ENCODE measurements at regions of chr6 and their contacts with region 1.

Region 1: DNA sequence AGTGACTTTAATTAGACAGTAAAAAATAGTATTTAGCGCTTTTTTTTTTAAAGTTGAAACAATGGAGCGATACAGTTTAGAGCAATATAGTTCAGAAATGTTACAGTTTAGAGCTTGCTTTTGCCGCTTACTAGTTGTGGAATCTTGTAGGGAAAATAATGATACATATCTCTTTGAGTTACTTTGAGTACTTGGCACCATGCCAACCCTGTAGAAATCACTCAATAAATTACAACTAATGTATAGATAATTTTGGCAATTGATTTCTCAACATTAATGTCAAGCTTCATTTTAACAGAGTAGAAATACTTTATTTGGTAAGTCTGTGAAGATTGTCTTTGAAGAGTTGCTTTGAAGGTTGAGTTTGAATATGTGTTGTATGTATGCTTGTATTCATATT is 27.4 kb downstream of the CDC40 start:
- DNase-seq: no peak
- ATAC-seq: no peak
- H3K4me3 Mint-ChIP-seq: no peak overlapping the region
- H3K27ac Mint-ChIP-seq: no peak overlapping the region
- H3K4me1 Mint-ChIP-seq: peaks cover 46% of the 10 kb centered on the region
- H3K27me3 Mint-ChIP-seq: no peaks in the 10 kb centered on the region
- CTCF ChIP-seq: no peak

Region 2: DNA sequence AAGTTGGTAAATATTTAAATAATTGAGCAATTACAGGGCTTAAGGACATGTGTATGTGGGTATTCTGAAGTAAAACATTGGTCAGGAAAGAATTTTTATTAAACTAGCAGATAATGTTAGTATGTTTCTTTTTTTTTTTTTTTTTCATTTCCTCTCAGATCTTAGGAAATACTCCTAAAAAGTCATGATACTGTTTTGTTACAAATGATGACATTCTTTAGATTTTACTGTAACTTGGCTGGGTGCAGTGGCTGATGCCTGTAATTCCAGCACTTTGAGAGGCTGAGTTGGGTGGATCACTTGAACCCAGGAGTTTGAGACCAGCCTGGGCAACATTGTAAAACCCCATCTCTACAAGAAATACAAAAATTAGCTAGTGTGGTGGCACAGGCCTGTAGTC is 14.1 kb after region 1 on chr6:
- CTCF ChIA-PET with region 1: no interaction called
- POLR2A ChIA-PET with region 1: interaction called, 4 read pairs
- intact Hi-C with region 1: loop called (anchors 2 kb)
- DNase-seq: no peak
- ATAC-seq: no peak
- H3K4me3 Mint-ChIP-seq: no peak overlapping the region
- H3K27ac Mint-ChIP-seq: no peak overlapping the region
- H3K4me1 Mint-ChIP-seq: no peaks in the 10 kb centered on the region
- H3K27me3 Mint-ChIP-seq: no peaks in the 10 kb centered on the region
- CTCF ChIP-seq: no peak

Measured in activated B cell treated with CpG ODN at 0.5 μM for 24 hours (primary cell).